ENCODE measurements at regions of chr11 and their contacts with region 1.

Region 1: DNA sequence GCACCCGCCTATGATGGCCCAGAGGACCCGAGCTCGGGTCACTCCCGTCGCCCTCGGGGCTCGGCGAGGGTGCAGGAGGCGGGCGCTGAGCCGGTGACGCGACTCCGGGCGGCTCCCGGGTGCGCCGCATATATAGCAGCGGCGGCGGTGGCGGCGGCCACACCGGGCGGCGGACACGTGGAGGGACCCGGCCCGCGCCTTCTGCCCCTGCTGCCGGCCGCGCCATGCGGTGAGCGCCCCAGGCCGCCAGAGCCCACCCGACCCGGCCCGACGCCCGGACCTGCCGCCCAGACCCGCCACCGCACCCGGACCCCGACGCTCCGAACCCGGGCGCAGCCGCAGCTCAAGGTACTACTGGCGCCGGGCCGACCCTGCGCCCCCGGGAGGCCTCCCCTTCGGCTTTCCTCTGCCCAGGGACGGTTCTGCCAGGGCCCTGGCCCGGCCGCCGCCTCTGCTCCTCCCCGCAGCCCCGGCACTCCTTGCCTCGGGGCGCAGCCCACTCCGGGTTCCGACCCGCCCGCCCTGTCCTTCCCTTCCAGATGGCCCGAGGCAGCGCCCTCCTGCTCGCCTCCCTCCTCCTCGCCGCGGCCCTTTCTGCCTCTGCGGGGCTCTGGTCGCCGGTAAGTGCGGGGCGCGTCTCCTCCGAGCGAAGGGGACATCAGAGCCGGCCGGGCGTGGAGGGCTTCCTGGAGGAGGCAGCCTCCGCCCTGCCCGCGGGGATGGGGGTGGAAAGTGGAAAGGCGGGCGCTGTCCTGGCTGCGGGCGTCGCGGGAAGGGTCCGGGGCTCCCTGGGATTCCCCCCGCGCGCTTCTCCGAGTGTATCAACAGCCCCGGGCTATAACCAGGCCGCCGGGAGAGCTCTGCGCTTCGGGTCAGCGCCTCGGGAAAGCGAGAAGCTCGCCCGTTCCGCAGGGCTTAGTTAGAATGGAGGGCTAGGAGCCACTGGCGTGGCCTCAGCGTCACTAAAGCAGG is at the start of gene GAL:
- DNase-seq: no peak
- H3K4me3 ChIP-seq: peak within 1 kb of the TSS; percentile 44 to 79 (median 54)
- H3K27ac ChIP-seq: no peak within 1 kb of the TSS
- H3K4me1 ChIP-seq: peaks cover 0 to 13% (median 10%) of the 10 kb centered on the region in 4 experiments; a peak in 6 of 7 replicates
- H3K27me3 ChIP-seq: peaks cover 11 to 41% (median 31%) of the 10 kb centered on the region in 4 experiments
- CTCF ChIP-seq: no peak
- EP300 ChIP-seq: no peak
- POLR2A ChIP-seq: peak in 1 of 2 experiments; percentile 52; a peak in 2 of 3 replicates
- RAD21 ChIP-seq: no peak
- total RNA-seq, gene GAL: 233 and 234 TPM in 2 replicates

Region 2: DNA sequence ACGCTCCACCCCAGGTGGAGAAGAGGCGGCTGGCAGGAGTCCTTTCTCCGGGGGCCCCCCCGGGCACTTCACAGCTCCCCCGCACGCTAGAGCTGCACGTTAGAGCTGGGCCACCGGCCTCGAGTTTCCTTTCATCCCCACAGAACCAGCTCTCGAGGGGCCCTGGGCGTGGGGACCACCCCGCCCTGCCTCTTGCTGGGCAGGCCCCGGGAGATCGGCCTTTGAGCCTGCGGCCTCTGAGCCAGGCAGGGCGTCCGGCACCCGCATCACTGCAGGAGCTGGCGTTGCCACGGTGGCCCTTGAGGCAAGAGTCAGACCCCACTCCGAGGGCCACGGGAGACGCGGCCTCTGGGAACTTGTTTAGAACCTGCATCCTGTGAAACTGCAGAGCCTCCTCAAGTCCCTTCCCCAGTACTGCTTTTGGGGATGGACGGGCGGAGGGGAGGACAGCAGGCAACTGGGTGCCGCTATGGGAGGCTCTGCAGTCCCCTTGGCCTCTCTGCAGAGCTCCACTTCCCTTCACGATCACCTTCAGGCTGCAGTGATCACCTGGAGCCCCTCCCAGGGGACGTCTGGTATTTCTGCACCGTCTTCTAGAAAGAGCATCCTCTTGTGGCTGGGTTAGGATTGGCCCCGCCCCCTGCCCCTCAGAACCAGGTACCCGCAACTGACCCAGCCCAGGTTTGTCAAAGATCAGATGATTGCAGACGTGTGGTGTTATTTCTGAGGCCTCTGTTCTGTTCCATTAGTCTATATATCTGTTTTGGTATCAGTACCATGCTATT is 14.3 kb before region 1 on chr11:
- CTCF ChIA-PET with region 1: interaction called, 3 read pairs
- POLR2A ChIA-PET with region 1: interaction called, 17 read pairs
- DNase-seq: no peak
- H3K4me3 ChIP-seq: no peak overlapping the region
- H3K27ac ChIP-seq: no peak overlapping the region
- H3K4me1 ChIP-seq: peaks cover 0 to 5% (median 2%) of the 10 kb centered on the region in 4 experiments; a peak in 3 of 7 replicates
- H3K27me3 ChIP-seq: no peaks in the 10 kb centered on the region
- CTCF ChIP-seq: peak; percentile 11 to 40 (median 32)
- EP300 ChIP-seq: no peak
- POLR2A ChIP-seq: no peak
- RAD21 ChIP-seq: peak; percentile 14 to 39; a peak in 2 of 4 replicates